ENCODE measurements at regions of chr9 and their contacts with region 1.

Region 1: DNA sequence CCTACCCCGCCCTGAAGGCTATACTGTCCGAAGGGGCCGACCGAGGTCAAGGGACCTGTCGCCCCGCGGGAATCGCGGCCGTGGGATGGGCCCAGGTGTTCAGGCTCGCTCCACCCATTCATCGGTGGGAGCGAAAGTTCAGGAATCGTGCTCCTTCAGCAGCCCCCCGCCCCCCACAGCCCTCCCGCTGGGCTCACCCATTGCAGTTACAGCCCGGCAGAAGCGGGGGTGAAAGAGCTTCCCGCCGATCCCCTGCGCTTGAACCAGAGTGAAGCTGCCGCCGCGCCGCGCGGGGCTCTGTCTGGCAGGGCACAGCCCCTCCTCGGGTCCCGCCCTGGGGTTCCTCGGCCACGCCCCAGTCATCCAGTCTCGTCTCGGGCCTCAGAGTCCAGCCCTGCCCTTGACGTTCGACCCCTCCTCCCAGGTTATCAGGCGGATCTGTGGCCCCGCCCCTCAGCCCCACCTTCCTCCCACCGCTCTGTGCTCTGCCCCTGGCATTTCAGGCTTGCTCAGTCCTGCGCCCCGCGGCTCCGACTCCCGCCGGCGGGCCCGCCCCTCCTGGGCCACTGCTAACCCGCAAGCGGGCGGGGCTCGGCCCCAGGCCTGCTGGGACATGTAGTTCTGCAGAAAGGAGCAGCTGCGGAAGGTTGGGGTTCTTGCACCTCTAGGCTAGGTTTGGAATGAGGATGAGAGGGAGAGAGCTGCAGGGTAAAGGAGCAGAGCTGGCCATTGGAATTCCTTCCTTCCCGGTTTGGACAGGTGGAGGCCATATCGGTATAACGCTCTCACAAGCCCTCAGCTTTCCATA is at the start of gene MYORG:
- DNase-seq: peak; percentile 94 to 98
- ATAC-seq: peak; percentile 82 to 88 (median 86)
- H3K4me3 ChIP-seq: peak within 1 kb of the TSS; percentile 71
- H3K27ac ChIP-seq: peak within 1 kb of the TSS; percentile 78
- H3K4me1 ChIP-seq: peaks cover 29% of the 10 kb centered on the region
- H3K27me3 ChIP-seq: no peaks in the 10 kb centered on the region
- CTCF ChIP-seq: no peak
- total RNA-seq, gene MYORG: 16.3 to 34.1 (median 25.1) TPM

Region 2: GRCh38 chr9:34338665-34339385 is 38.0 kb before region 1 on chr9:
- intact Hi-C with region 1: loop called in 1 of 2 experiments (anchors 2 kb)
- DNase-seq: no peak
- ATAC-seq: peak in 3 of 4 donors; percentile 21 to 57 (median 27)
- H3K4me3 ChIP-seq: no peak overlapping the region
- H3K27ac ChIP-seq: no peak overlapping the region
- H3K4me1 ChIP-seq: peaks cover 20% of the 10 kb centered on the region
- H3K27me3 ChIP-seq: no peaks in the 10 kb centered on the region
- CTCF ChIP-seq: no peak

Region 3: GRCh38 chr9:35042081-35042604 is 665.3 kb after region 1 on chr9:
- intact Hi-C with region 1: no loop called
- DNase-seq: peak in 1 of 2 donors; percentile 30
- ATAC-seq: peak; percentile 52 to 85 (median 68)
- H3K4me3 ChIP-seq: no peak overlapping the region
- H3K27ac ChIP-seq: no peak overlapping the region
- H3K4me1 ChIP-seq: no peaks in the 10 kb centered on the region
- H3K27me3 ChIP-seq: no peaks in the 10 kb centered on the region
- CTCF ChIP-seq: no peak